ENCODE measurements at regions of chr19 and their contacts with region 1.

Region 1: DNA sequence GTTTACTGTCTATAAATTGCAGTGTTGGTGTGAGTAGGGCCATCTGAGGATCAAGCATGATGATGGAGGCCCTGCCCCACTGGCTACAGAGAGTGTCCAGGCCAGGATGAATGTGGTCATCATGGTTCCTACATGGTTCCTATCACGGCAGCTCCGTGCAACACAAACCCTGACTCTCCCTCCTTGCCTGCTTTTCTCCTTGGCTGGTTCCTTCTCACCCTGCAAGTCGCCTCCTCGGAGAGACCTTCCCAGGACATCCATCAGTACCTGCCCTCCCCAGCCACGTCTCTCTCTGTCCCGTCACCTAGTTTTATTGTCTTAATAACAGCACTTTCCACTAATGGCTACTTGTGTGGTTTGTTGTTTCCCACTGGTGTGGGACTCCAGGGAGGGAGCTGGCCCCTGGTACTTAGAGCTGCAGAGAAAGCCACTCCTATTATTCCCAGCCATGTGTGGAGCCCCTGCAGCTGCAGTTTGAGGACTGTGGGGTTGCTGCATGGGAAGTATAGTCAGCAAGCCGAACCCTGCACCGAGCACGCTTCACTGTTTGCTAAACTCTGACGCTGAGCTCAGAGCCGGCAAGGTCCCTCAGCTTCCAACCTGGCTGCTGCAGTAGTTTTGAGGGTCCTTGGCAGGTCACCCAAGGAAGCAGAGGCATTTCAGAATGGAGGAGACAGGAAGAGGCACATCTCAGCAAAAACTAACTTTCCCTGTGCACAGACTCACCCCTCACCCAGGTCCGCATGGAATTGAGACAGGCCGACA is 146.4 kb upstream of the VSTM2B start:
- DNase-seq: no peak
- H3K4me3 ChIP-seq: no peak overlapping the region
- H3K27ac ChIP-seq: no peak overlapping the region
- H3K4me1 ChIP-seq: no peaks in the 10 kb centered on the region
- H3K27me3 ChIP-seq: no peaks in the 10 kb centered on the region
- CTCF ChIP-seq: no peak

Region 2: GRCh38 chr19:29429021-29429420 is 49.6 kb after region 1 on chr19:
- CTCF ChIA-PET with region 1: no interaction called
- dilution Hi-C with region 1: loop called (anchors 5 kb)
- in situ Hi-C with region 1: no loop called
- intact Hi-C with region 1: no loop called
- DNase-seq: no peak
- H3K4me3 ChIP-seq: no peak overlapping the region
- H3K27ac ChIP-seq: no peak overlapping the region
- H3K4me1 ChIP-seq: no peaks in the 10 kb centered on the region
- H3K27me3 ChIP-seq: no peaks in the 10 kb centered on the region
- CTCF ChIP-seq: no peak